AG04450 (cell line): ENCODE measurements at regions of chr20 and their contacts with region 1.

Region 1: GRCh38 chr20:5657190-5657875 is 92.9 kb upstream of the SHLD1 start:
- DNase-seq: peak; percentile 91
- H3K4me3 ChIP-seq: no peak overlapping the region
- H3K27ac ChIP-seq: peak overlapping the region; percentile 95
- H3K27me3 ChIP-seq: no peaks in the 10 kb centered on the region
- CTCF ChIP-seq: no peak

Region 2: DNA sequence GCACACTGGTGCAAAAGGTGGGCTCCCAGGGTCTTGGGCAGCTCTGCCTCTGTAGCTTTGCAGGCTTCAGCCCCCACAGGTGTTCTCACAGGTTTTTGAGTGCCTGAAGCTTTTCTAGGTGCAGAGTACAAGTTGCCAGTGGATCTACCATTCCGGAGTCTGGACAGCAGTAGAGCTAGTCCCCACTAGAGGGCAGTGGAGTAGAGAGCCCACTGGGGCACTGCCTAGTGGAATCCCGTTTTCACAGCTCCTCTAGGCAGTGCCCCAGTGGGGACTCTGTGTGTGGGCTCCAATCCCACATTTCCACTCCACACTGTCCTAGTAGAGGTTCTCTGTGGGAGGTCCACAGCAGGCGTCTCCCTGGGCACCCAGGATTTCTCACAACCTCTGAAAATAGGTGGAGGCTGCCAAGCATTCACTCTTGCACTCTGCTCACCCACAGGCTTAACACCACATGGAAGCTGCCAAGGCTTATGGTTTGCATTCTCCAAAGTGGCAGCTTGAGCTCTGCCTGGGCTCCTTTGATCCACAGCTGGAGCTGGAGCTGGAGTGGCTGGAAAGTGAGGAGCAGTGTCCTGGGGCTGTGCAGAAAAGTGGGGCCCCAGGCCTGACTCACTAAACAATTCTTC is 254.3 kb before region 1 on chr20:
- CTCF ChIA-PET with region 1: no interaction called
- POLR2A ChIA-PET with region 1: no interaction called
- DNase-seq: no peak
- H3K4me3 ChIP-seq: no peak overlapping the region
- H3K27ac ChIP-seq: no peak overlapping the region
- H3K27me3 ChIP-seq: no peaks in the 10 kb centered on the region
- CTCF ChIP-seq: peak; percentile 60

Region 3: GRCh38 chr20:5569021-5569420 is 88.3 kb before region 1 on chr20:
- CTCF ChIA-PET with region 1: no interaction called
- POLR2A ChIA-PET with region 1: no interaction called
- DNase-seq: no peak
- H3K4me3 ChIP-seq: no peak overlapping the region
- H3K27ac ChIP-seq: no peak overlapping the region
- H3K27me3 ChIP-seq: no peaks in the 10 kb centered on the region
- CTCF ChIP-seq: peak; percentile 57

Region 4: GRCh38 chr20:5642155-5642981 is 15.0 kb before region 1 on chr20:
- CTCF ChIA-PET with region 1: interaction called, 3 read pairs
- POLR2A ChIA-PET with region 1: interaction called, 17 read pairs
- DNase-seq: no peak
- H3K4me3 ChIP-seq: no peak overlapping the region
- H3K27ac ChIP-seq: no peak overlapping the region
- H3K27me3 ChIP-seq: no peaks in the 10 kb centered on the region
- CTCF ChIP-seq: no peak

Region 5: GRCh38 chr20:5703681-5704101 is 46.4 kb after region 1 on chr20:
- CTCF ChIA-PET with region 1: no interaction called
- POLR2A ChIA-PET with region 1: interaction called, 11 read pairs
- DNase-seq: no peak
- H3K4me3 ChIP-seq: no peak overlapping the region
- H3K27ac ChIP-seq: no peak overlapping the region
- H3K27me3 ChIP-seq: peaks cover 3% of the 10 kb centered on the region
- CTCF ChIP-seq: no peak

Region 6: GRCh38 chr20:5835321-5835821 is 178.0 kb after region 1 on chr20:
- CTCF ChIA-PET with region 1: no interaction called
- POLR2A ChIA-PET with region 1: no interaction called
- DNase-seq: no peak
- H3K4me3 ChIP-seq: no peak overlapping the region
- H3K27ac ChIP-seq: no peak overlapping the region
- H3K27me3 ChIP-seq: no peaks in the 10 kb centered on the region
- CTCF ChIP-seq: no peak

Region 7: GRCh38 chr20:6026051-6026450 is 368.7 kb after region 1 on chr20:
- CTCF ChIA-PET with region 1: no interaction called
- POLR2A ChIA-PET with region 1: no interaction called
- DNase-seq: peak; percentile 11
- H3K4me3 ChIP-seq: no peak overlapping the region
- H3K27ac ChIP-seq: no peak overlapping the region
- H3K27me3 ChIP-seq: no peaks in the 10 kb centered on the region
- CTCF ChIP-seq: no peak